GM12878 (cell line): ENCODE measurements at regions of chr15 and their contacts with region 1.

Region 1: GRCh38 chr15:34708422-34708821 is 46.4 kb downstream of the GJD2 start:
- DNase-seq: no peak
- ATAC-seq: peak; percentile 81
- H3K4me3 ChIP-seq: no peak overlapping the region
- H3K27ac ChIP-seq: no peak overlapping the region
- H3K4me1 ChIP-seq: no peaks in the 10 kb centered on the region
- H3K27me3 ChIP-seq: no peaks in the 10 kb centered on the region; a peak in 1 of 4 replicates
- CTCF ChIP-seq: peak; percentile 66 to 75 (median 71)
- EP300 ChIP-seq: no peak
- POLR2A ChIP-seq: no peak
- RAD21 ChIP-seq: peak; percentile 53

Region 2: GRCh38 chr15:34241372-34242330 is 466.8 kb before region 1 on chr15:
- CTCF ChIA-PET with region 1: no interaction called
- POLR2A ChIA-PET with region 1: no interaction called
- RAD21 ChIA-PET with region 1: no interaction called
- SMC1A ChIA-PET with region 1: no interaction called
- in situ Hi-C with region 1: no loop called
- intact Hi-C with region 1: no loop called
- DNase-seq: no peak
- ATAC-seq: peak; percentile 89
- H3K4me3 ChIP-seq: no peak overlapping the region
- H3K27ac ChIP-seq: no peak overlapping the region
- H3K4me1 ChIP-seq: peaks cover 5% of the 10 kb centered on the region
- H3K27me3 ChIP-seq: no peaks in the 10 kb centered on the region
- CTCF ChIP-seq: peak; percentile 61 to 70 (median 68)
- EP300 ChIP-seq: no peak
- POLR2A ChIP-seq: no peak
- RAD21 ChIP-seq: peak; percentile 66

Region 3: DNA sequence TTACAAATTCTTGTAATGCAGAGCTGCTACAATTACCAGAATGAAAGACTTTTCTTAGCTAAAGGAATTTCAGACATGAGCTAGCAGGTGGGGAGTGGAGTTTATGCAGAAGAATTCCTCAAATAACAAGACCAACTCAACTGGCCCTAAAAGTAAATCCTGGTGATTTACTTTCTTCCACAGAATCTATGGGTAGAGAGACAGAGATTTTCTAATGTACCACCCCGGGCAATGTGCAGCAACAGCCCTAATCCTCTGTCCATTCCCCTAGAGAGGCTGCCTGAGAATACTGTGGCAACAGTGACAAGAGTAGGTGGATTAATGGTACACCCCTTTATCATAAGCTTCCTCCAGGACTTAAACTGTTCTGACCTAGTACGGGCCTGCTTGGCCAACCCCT is 205.9 kb after region 1 on chr15:
- CTCF ChIA-PET with region 1: interaction called, 13 read pairs
- POLR2A ChIA-PET with region 1: no interaction called
- RAD21 ChIA-PET with region 1: no interaction called
- SMC1A ChIA-PET with region 1: no interaction called
- in situ Hi-C with region 1: no loop called
- intact Hi-C with region 1: no loop called
- DNase-seq: no peak
- ATAC-seq: no peak
- H3K4me3 ChIP-seq: no peak overlapping the region
- H3K27ac ChIP-seq: no peak overlapping the region
- H3K4me1 ChIP-seq: no peaks in the 10 kb centered on the region
- H3K27me3 ChIP-seq: no peaks in the 10 kb centered on the region
- CTCF ChIP-seq: no peak
- EP300 ChIP-seq: no peak
- POLR2A ChIP-seq: no peak
- RAD21 ChIP-seq: no peak

Region 4: GRCh38 chr15:34927726-34928125 is 219.3 kb after region 1 on chr15:
- CTCF ChIA-PET with region 1: no interaction called
- POLR2A ChIA-PET with region 1: no interaction called
- RAD21 ChIA-PET with region 1: no interaction called
- SMC1A ChIA-PET with region 1: no interaction called
- in situ Hi-C with region 1: loop called (anchors 5 kb)
- intact Hi-C with region 1: no loop called
- DNase-seq: no peak
- ATAC-seq: no peak
- H3K4me3 ChIP-seq: no peak overlapping the region
- H3K27ac ChIP-seq: no peak overlapping the region
- H3K4me1 ChIP-seq: no peaks in the 10 kb centered on the region
- H3K27me3 ChIP-seq: no peaks in the 10 kb centered on the region
- CTCF ChIP-seq: no peak
- EP300 ChIP-seq: no peak
- POLR2A ChIP-seq: no peak
- RAD21 ChIP-seq: no peak